ENCODE measurements at regions of chr19 and their contacts with region 1.

Region 1: GRCh38 chr19:38326591-38326990 is 6.9 kb downstream of the KCNK6 start:
- DNase-seq: no peak
- ATAC-seq: no peak

Region 2: DNA sequence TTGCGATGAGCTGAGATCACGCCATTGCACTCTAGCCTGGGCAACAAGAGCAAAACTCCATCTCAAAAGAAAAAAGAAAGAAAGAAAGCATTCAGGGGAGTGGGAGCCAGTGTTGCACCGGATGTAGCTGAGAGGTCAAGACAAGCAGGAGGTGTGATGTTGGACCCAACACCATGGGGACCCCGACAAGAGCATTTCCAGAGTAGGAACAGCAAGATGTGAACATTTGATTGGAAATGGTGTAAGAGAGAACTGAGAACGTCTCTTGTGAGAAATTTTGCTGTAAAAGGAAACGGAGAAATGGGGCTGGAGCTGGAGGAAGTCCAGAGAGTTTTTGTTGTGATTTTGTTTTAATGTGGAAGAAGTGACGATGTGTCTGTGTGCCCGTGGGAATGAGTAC is 86.8 kb before region 1 on chr19:
- intact Hi-C with region 1: loop called in 1 of 2 experiments (anchors 5 kb)
- DNase-seq: no peak
- ATAC-seq: no peak